Activated CD8-positive, alpha-beta T cell treated with anti-CD3 and anti-CD28 coated beads, Interleukin-2, amount 10 ng/mL, durations not matched to agents 7 days and 5 days (primary cell): ENCODE measurements at regions of chr14 and their contacts with region 1.

Region 1: DNA sequence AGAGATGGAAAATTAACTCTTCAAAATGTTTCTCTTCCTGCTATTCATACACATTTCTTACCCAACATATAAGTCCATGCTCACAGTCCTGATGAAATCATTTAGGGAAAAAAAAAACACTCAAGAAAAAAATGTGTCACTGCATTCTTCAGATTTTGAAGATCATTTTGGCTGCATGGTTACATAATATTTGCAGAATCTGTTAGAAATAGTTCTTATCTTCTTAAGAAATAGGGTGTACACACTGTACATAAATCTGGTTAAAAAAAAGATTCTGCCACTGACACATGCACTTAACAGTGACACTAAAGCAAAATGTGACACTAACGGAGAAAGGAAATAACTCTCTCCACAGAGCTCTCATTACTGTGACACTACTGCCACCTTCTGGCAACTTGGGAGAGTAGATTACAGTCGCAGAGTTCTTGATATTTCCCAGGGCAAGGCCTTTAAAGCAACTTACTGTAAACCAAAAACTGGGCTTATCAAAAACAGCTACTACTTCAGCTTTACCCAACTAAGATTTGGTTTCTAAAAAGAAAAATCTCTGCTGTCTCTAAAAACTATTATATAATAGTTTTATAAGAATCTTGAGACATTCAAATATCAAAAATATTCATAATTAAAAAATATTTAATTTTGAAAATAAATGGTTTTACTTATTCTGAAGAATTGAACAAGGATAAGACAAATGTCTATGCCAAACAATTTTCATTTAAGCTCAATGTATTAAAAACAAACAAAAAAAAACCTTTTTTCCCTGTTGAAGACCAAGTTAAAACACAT is 65.0 kb downstream of the SETD3 start:
- DNase-seq: peak; percentile 80
- ATAC-seq: peak; percentile 99
- H3K4me3 Mint-ChIP-seq: no peak overlapping the region
- H3K27ac Mint-ChIP-seq: no peak overlapping the region
- H3K4me1 Mint-ChIP-seq: peaks cover 18% of the 10 kb centered on the region
- H3K27me3 Mint-ChIP-seq: no peaks in the 10 kb centered on the region

Region 2: GRCh38 chr14:99393047-99393655 is 22.5 kb before region 1 on chr14:
- CTCF ChIA-PET with region 1: interaction called, 28 read pairs
- POLR2A ChIA-PET with region 1: no interaction called
- DNase-seq: peak; percentile 45
- ATAC-seq: peak; percentile 56
- H3K4me3 Mint-ChIP-seq: no peak overlapping the region
- H3K27ac Mint-ChIP-seq: no peak overlapping the region
- H3K4me1 Mint-ChIP-seq: peaks cover 11% of the 10 kb centered on the region
- H3K27me3 Mint-ChIP-seq: no peaks in the 10 kb centered on the region

Region 3: DNA sequence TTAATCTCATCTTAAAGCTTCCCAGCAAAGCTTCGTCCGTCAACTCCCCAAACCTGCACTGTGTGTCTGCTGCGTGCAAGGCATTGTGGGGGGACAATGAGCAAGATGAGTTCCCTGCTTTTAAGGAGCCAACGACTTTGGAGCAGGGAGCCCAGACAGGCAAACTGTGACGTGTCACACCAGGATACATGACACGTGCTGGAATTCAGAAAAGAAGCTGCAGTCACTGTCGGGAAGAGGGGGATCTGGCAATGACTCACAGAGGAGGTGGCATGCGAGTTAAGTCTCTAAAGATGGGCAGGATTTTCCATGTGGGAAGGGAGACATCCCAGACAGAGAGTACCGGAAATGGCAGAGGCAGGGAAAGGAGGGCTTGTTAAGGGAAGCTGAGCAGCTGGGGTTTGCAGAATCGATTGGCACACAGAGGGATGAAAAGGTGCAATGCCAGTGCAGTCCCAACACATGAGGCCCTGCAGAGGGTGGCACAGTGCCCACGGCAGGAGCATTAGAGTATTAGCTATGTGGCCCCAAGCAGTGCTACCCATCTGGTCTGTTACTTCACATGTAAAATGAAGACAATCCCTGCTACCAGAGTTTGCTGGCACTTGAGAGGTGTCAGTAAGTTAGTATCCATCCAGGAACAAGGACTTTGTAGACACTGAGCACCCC is 12.1 kb after region 1 on chr14:
- CTCF ChIA-PET with region 1: interaction called, 21 read pairs
- POLR2A ChIA-PET with region 1: no interaction called
- DNase-seq: no peak
- ATAC-seq: no peak
- H3K4me3 Mint-ChIP-seq: no peak overlapping the region
- H3K27ac Mint-ChIP-seq: no peak overlapping the region
- H3K4me1 Mint-ChIP-seq: peaks cover 5% of the 10 kb centered on the region
- H3K27me3 Mint-ChIP-seq: no peaks in the 10 kb centered on the region

Region 4: DNA sequence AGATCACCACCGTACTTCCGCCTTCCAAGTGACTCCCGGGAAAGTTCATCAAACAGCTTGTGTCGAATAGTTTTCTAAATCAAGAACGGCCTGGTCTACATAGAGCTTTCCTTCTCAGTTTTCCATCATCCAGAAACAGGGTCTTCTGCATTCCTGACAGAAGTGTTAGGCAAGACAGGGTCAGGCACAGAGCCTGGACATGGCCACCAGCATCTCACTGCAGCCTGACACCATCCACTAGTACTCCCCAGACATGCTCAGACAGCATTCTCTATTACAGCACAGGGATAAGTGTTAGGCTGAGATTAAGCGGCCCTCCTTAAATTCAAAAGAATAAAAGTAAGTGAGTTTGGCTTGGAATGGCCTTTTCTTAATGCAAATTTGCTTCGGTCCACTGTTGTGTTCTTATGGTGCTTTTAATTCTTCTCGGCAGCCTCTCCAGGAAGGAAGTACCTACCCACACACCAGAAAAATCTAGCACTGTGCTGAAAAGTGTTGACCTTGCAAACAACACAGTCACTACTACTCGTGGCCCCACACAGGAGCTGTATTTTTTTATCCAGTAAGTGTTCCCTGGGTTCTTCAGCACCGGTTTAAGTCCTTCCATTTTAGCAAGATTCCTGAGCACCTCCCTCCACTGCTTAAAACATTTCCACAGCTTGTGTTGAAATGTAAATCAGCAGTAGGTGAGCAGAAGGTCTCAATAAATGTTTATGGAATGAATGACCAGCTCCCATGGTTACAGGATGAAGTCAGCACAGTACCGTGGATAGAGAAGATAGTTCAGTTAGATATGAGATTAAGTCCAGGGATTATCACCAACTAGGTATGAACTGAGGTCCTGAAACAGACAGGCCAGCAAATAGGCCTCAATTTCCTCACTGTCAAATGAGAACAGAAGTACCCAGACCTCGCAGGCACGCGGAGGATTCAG is 20.8 kb after region 1 on chr14:
- CTCF ChIA-PET with region 1: interaction called, 21 read pairs
- POLR2A ChIA-PET with region 1: no interaction called
- DNase-seq: no peak
- ATAC-seq: peak; percentile 63
- H3K4me3 Mint-ChIP-seq: peak overlapping the region; percentile 27
- H3K27ac Mint-ChIP-seq: peak overlapping the region; percentile 74
- H3K4me1 Mint-ChIP-seq: peaks cover 25% of the 10 kb centered on the region
- H3K27me3 Mint-ChIP-seq: no peaks in the 10 kb centered on the region

Region 5: GRCh38 chr14:99454246-99454645 is 38.6 kb after region 1 on chr14:
- CTCF ChIA-PET with region 1: no interaction called
- POLR2A ChIA-PET with region 1: no interaction called
- DNase-seq: no peak
- ATAC-seq: no peak
- H3K4me3 Mint-ChIP-seq: no peak overlapping the region
- H3K27ac Mint-ChIP-seq: no peak overlapping the region
- H3K4me1 Mint-ChIP-seq: no peaks in the 10 kb centered on the region
- H3K27me3 Mint-ChIP-seq: no peaks in the 10 kb centered on the region

Region 6: DNA sequence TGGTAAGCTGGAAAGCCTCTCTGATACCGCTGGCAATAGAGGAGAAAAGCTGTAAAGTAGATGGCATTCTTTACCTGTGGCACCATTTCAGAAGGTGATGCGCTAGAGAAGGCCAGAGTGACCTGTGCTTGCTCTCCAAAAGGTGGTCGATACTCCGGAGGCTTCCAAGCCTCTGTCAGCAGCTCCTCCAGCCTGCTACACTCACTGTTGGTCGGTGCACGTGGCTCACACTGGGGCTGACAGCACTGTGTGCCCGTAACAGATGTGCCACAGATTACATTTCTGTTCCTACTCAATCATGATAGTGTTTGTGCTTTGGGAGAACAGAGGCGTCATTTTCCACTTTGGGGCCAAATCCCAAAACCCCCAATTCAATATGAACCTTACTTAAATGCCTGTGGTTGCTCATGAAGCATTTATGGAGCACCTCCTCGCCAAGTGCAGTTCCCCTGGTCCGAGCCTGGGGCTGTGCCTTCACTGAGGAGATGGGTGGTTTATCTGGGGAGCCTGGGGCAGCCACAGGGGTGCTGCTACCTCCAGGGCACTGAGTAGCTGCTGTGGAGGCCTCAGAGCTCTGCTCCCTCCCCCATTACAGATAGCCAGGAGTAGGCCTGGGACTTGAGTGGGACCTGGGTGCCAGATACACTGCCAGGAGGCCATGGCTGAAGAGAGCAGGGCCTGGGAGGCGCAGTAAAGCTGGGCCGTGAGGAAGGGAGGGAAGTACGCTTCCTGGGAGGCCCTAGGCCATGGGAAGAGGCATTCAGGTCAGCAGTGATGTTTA is 92.4 kb after region 1 on chr14:
- CTCF ChIA-PET with region 1: no interaction called
- POLR2A ChIA-PET with region 1: no interaction called
- DNase-seq: no peak
- ATAC-seq: no peak
- H3K4me3 Mint-ChIP-seq: no peak overlapping the region
- H3K27ac Mint-ChIP-seq: no peak overlapping the region
- H3K4me1 Mint-ChIP-seq: no peaks in the 10 kb centered on the region
- H3K27me3 Mint-ChIP-seq: no peaks in the 10 kb centered on the region

Region 7: GRCh38 chr14:99518441-99519346 is 103.0 kb after region 1 on chr14:
- CTCF ChIA-PET with region 1: no interaction called
- POLR2A ChIA-PET with region 1: no interaction called
- DNase-seq: peak; percentile 85
- ATAC-seq: peak; percentile 77
- H3K4me3 Mint-ChIP-seq: no peak overlapping the region
- H3K27ac Mint-ChIP-seq: no peak overlapping the region
- H3K4me1 Mint-ChIP-seq: no peaks in the 10 kb centered on the region
- H3K27me3 Mint-ChIP-seq: no peaks in the 10 kb centered on the region

Region 8: DNA sequence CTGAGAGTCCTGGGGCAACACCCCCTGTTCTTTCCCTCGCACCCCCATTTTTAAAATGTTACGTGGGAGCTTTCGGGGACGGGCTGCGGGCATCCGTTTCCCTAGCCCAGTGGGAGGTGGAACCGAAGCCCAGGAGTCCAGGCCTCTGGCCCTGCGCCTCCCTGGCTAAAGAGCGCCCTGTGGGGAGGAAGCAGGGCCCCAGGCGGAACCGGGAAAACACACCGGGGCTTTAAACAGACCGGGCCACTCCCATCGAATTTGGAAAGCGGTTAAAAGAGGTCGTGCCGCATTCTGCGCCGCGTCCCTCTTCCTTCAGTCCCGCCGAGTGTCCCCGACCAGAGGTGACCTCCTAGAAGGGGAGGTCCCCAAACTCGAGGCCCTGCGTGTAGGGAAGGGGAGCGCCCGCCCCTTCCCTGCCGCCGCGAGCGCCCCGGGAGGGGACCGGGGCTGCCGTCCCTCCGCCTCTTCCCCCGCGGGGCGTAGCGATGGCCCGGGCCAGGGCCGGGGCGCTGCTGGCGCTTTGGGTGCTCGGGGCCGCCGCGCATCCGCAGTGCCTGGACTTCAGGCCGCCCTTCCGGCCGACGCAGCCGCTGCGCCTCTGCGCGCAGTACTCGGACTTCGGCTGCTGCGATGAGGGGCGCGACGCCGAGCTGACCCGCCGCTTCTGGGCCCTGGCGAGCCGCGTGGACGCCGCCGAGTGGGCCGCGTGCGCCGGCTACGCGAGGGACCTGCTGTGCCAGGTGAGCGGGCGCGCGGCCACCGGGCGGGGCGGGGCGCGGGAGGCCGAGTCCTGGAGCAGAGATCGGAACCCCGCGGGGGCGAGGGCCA is 229.2 kb after region 1 on chr14 and contains the start of gene HHIPL1:
- CTCF ChIA-PET with region 1: no interaction called
- POLR2A ChIA-PET with region 1: no interaction called
- DNase-seq: no peak
- ATAC-seq: no peak
- H3K4me3 Mint-ChIP-seq: no peak within 1 kb of the TSS
- H3K27ac Mint-ChIP-seq: no peak within 1 kb of the TSS
- H3K4me1 Mint-ChIP-seq: peaks cover 2% of the 10 kb centered on the region
- H3K27me3 Mint-ChIP-seq: peaks cover 31% of the 10 kb centered on the region
- total RNA-seq, gene HHIPL1: not detected